ENCODE measurements at regions of chr3 and their contacts with region 1.

Region 1: GRCh38 chr3:142447852-142448823 is at the start of gene XRN1:
- DNase-seq: peak; percentile 92 to 96 (median 95)
- ATAC-seq: peak; percentile 95
- H3K4me3 ChIP-seq: peak within 1 kb of the TSS; percentile 86 to 93
- H3K4me3 Mint-ChIP-seq: peak within 1 kb of the TSS; percentile 99
- H3K27ac ChIP-seq: peak within 1 kb of the TSS; percentile 97 to 99
- H3K27ac Mint-ChIP-seq: peak within 1 kb of the TSS; percentile 100
- H3K4me1 ChIP-seq: peaks cover 40% of the 10 kb centered on the region
- H3K4me1 Mint-ChIP-seq: peaks cover 43% of the 10 kb centered on the region
- H3K27me3 ChIP-seq: no peaks in the 10 kb centered on the region
- H3K27me3 Mint-ChIP-seq: no peaks in the 10 kb centered on the region
- CTCF ChIP-seq: no peak
- total RNA-seq, gene XRN1: 91.0 to 105 TPM

Region 2: DNA sequence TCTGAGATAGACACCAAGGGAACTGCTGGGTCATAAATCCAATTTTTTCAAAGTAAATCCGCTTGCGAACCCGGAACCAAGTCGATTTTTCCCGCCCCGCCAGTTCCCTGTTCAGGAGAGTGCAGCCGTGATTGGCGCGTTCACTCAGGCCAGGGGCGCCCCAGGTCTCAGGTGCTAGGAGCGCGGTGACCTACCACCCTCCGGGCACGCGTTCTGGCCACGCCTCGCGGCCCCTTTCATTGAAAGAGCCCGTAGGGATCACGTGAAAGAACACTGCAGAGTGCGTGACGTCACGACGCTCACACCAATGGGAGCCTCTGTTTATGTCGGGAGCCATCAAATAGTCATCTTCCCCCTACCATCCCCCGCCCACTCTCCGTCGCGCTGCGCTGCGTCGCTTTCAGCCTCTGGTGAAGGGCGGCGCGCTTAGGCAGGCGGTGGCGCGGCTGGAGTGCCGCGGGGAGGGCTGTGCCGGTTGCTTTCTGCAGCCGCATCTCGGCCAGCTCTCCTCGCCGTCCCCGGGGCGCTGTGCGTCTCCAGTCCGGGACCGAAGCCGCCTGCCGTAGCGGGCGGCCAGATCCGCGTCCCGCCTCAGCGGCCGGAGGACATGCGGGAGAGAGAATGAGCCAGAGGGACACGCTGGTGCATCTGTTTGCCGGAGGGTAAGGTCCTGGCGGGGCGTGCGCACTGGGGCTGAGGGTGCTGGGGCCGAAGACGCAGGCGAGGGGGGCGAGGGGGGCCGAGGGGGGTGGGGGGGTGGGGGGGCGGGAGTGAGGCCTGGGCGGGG is 1506.5 kb before region 1 on chr3 and contains the start of gene SLC25A36:
- CTCF ChIA-PET with region 1: no interaction called
- POLR2A ChIA-PET with region 1: no interaction called
- intact Hi-C with region 1: loop called in 1 of 2 experiments (anchors 2 kb)
- DNase-seq: peak; percentile 90 to 100 (median 96)
- ATAC-seq: peak; percentile 96
- H3K4me3 ChIP-seq: peak within 1 kb of the TSS; percentile 71 to 78
- H3K4me3 Mint-ChIP-seq: peak within 1 kb of the TSS; percentile 90
- H3K27ac ChIP-seq: peak within 1 kb of the TSS; percentile 85 to 88
- H3K27ac Mint-ChIP-seq: peak within 1 kb of the TSS; percentile 99
- H3K4me1 ChIP-seq: peaks cover 14% of the 10 kb centered on the region
- H3K4me1 Mint-ChIP-seq: peaks cover 36% of the 10 kb centered on the region
- H3K27me3 ChIP-seq: no peaks in the 10 kb centered on the region
- H3K27me3 Mint-ChIP-seq: no peaks in the 10 kb centered on the region
- CTCF ChIP-seq: no peak
- total RNA-seq, gene SLC25A36: 156 to 165 TPM

Region 3: GRCh38 chr3:142148792-142149672 is 299.1 kb before region 1 on chr3 and contains the start of gene TFDP2:
- CTCF ChIA-PET with region 1: no interaction called
- POLR2A ChIA-PET with region 1: no interaction called
- intact Hi-C with region 1: loop called (anchors 2 to 5 kb)
- DNase-seq: peak; percentile 68 to 92 (median 85)
- ATAC-seq: peak; percentile 98
- H3K4me3 ChIP-seq: peak within 1 kb of the TSS; percentile 69 to 74
- H3K4me3 Mint-ChIP-seq: peak within 1 kb of the TSS; percentile 89
- H3K27ac ChIP-seq: peak within 1 kb of the TSS; percentile 67 to 73
- H3K27ac Mint-ChIP-seq: peak within 1 kb of the TSS; percentile 85
- H3K4me1 ChIP-seq: peaks cover 17% of the 10 kb centered on the region
- H3K4me1 Mint-ChIP-seq: peaks cover 32% of the 10 kb centered on the region
- H3K27me3 ChIP-seq: no peaks in the 10 kb centered on the region
- H3K27me3 Mint-ChIP-seq: no peaks in the 10 kb centered on the region
- CTCF ChIP-seq: no peak
- total RNA-seq, gene TFDP2: 37.0 to 43.0 TPM

Region 4: DNA sequence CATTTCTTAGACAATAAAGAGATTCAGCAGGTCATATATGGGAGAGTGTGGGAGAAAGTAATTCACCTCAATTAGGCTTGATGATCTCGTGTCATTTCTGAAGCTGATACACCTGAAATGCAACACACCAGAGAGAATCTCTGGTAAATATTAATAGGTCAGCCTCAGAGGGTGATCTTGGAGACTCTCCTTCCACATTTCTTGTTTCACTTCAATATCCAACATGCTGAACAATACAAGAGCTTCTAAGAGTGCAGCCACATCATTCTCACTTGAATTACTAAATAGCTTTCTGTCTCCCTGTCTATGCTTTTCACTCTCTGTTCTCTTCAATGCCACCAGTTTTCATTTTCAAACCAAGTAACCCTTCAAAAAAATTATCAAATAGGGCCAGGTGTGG is 151.6 kb before region 1 on chr3:
- CTCF ChIA-PET with region 1: no interaction called
- POLR2A ChIA-PET with region 1: no interaction called
- intact Hi-C with region 1: no loop called
- DNase-seq: no peak
- ATAC-seq: no peak
- H3K4me3 ChIP-seq: no peak overlapping the region
- H3K4me3 Mint-ChIP-seq: no peak overlapping the region
- H3K27ac ChIP-seq: no peak overlapping the region
- H3K27ac Mint-ChIP-seq: no peak overlapping the region
- H3K4me1 ChIP-seq: no peaks in the 10 kb centered on the region
- H3K4me1 Mint-ChIP-seq: no peaks in the 10 kb centered on the region
- H3K27me3 ChIP-seq: no peaks in the 10 kb centered on the region
- H3K27me3 Mint-ChIP-seq: no peaks in the 10 kb centered on the region
- CTCF ChIP-seq: no peak

Region 5: GRCh38 chr3:142509079-142509478 is 60.9 kb after region 1 on chr3:
- CTCF ChIA-PET with region 1: no interaction called
- POLR2A ChIA-PET with region 1: no interaction called
- intact Hi-C with region 1: loop called (anchors 1 to 2 kb)
- DNase-seq: peak in 2 of 9 experiments; percentile 15 to 36
- ATAC-seq: peak; percentile 62
- H3K4me3 ChIP-seq: peak overlapping the region in 1 of 2 experiments; percentile 51
- H3K4me3 Mint-ChIP-seq: peak overlapping the region; percentile 90
- H3K27ac ChIP-seq: peak overlapping the region in 1 of 2 experiments; percentile 74
- H3K27ac Mint-ChIP-seq: peak overlapping the region; percentile 95
- H3K4me1 ChIP-seq: no peaks in the 10 kb centered on the region
- H3K4me1 Mint-ChIP-seq: peaks cover 14% of the 10 kb centered on the region
- H3K27me3 ChIP-seq: no peaks in the 10 kb centered on the region
- H3K27me3 Mint-ChIP-seq: no peaks in the 10 kb centered on the region
- CTCF ChIP-seq: no peak

Region 6: DNA sequence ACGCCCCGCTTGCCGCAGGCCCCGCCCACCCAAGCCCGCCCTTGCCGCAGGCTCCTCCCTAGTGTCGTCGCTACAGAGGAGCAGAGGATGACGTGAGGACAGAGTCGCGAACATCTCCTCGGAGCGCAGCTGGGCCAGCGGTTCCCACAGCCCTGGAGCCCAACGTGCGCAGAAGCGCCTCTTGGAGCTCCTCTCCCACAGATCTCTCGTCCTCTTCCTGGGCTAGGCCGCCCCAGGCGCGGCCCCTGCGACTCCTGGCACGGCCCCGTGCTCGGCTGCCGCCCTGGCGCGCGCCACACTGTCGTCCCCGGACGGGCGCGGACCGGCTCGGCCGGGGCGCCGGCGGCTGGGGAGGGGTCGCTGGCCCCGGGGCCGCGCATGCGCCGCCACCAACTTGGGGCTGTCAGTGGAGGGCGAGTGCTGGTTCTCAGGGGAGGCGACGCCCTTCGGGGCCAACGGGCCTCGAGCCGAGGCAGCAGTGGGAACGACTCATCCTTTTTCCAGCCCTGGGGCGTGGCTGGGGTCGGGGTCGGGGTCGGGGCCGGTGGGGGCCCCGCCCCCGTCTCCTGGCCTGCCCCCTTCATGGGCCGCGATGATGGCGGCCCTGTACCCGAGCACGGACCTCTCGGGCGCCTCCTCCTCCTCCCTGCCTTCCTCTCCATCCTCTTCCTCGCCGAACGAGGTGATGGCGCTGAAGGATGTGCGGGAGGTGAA is 276.0 kb after region 1 on chr3 and contains the start of gene TRPC1:
- CTCF ChIA-PET with region 1: no interaction called
- POLR2A ChIA-PET with region 1: interaction called, 4 read pairs
- intact Hi-C with region 1: loop called (anchors 2 to 5 kb)
- DNase-seq: peak; percentile 2 to 93 (median 70)
- ATAC-seq: peak; percentile 96
- H3K4me3 ChIP-seq: peak within 1 kb of the TSS; percentile 54 to 63
- H3K4me3 Mint-ChIP-seq: peak within 1 kb of the TSS; percentile 91
- H3K27ac ChIP-seq: peak within 1 kb of the TSS in 1 of 2 experiments; percentile 63
- H3K27ac Mint-ChIP-seq: peak within 1 kb of the TSS; percentile 92
- H3K4me1 ChIP-seq: peaks cover 9% of the 10 kb centered on the region
- H3K4me1 Mint-ChIP-seq: peaks cover 20% of the 10 kb centered on the region
- H3K27me3 ChIP-seq: peaks cover 0 to 3% of the 10 kb centered on the region in 2 experiments
- H3K27me3 Mint-ChIP-seq: peaks cover 28% of the 10 kb centered on the region
- CTCF ChIP-seq: no peak
- total RNA-seq, gene TRPC1: 3.3 to 3.4 TPM

Region 7: DNA sequence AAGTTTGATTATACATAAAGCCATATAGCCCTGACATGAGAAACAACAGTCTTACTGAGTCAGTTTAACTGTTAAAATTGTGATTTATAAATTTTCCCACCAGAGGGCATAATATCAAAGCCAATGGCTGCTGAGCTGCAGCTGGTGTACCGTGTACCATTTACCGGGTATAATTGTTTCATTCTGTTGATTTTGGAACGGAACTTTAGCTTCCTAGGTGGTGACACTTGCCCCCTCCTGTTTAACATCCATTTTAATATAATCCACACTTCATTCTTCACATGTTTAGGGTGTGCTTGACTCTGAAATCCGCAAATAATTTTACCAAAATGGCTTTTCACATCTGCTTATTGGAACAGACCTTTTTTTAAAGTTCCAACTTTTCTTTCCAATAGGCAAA is 1327.3 kb after region 1 on chr3:
- CTCF ChIA-PET with region 1: no interaction called
- POLR2A ChIA-PET with region 1: no interaction called
- intact Hi-C with region 1: loop called in 1 of 2 experiments (anchors 10 kb)
- DNase-seq: peak in 2 of 9 experiments; percentile 38 to 59
- ATAC-seq: peak; percentile 69
- H3K4me3 ChIP-seq: no peak overlapping the region
- H3K4me3 Mint-ChIP-seq: no peak overlapping the region
- H3K27ac ChIP-seq: no peak overlapping the region
- H3K27ac Mint-ChIP-seq: no peak overlapping the region
- H3K4me1 ChIP-seq: no peaks in the 10 kb centered on the region
- H3K4me1 Mint-ChIP-seq: peaks cover 7% of the 10 kb centered on the region
- H3K27me3 ChIP-seq: no peaks in the 10 kb centered on the region
- H3K27me3 Mint-ChIP-seq: no peaks in the 10 kb centered on the region
- CTCF ChIP-seq: peak; percentile 59